Left ventricle myocardium inferior (tissue), 1 donor: ENCODE measurements at regions of chr1 and their contacts with region 1.

Region 1: GRCh38 chr1:184805667-184806295 is 51.1 kb upstream of the EDEM3 start:
- DNase-seq: peak; percentile 89
- H3K4me3 ChIP-seq: no peak overlapping the region
- H3K27ac ChIP-seq: peak overlapping the region; percentile 46
- H3K4me1 ChIP-seq: peaks cover 14% of the 10 kb centered on the region
- H3K27me3 ChIP-seq: no peaks in the 10 kb centered on the region
- CTCF ChIP-seq: peak; percentile 97

Region 2: GRCh38 chr1:184771190-184771691 is 34.5 kb before region 1 on chr1:
- intact Hi-C with region 1: no loop called
- DNase-seq: no peak
- H3K4me3 ChIP-seq: no peak overlapping the region
- H3K27ac ChIP-seq: no peak overlapping the region
- H3K4me1 ChIP-seq: no peaks in the 10 kb centered on the region
- H3K27me3 ChIP-seq: no peaks in the 10 kb centered on the region
- CTCF ChIP-seq: no peak

Region 3: DNA sequence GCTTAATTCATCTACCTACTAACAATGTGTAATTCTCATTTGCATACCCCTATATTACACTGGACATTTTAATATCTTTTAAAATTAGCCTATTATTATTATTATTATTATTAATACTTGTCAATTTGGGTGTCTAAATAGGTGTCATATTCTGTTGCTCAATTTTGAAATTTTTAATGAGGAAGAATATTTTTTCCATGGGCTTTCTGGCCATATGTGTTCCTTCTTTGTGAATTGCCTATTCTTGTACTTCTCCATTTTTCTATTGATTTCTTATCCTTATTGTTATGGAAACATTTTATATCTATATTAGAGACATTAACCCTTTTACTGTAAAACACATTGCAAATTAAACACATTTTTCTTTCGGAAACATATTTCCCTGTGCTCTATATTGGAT is 174.9 kb after region 1 on chr1:
- intact Hi-C with region 1: loop called (anchors 2 kb)
- DNase-seq: no peak
- H3K4me3 ChIP-seq: no peak overlapping the region
- H3K27ac ChIP-seq: no peak overlapping the region
- H3K4me1 ChIP-seq: peaks cover 11% of the 10 kb centered on the region
- H3K27me3 ChIP-seq: no peaks in the 10 kb centered on the region
- CTCF ChIP-seq: no peak

Region 4: GRCh38 chr1:185159966-185160365 is 354.2 kb after region 1 on chr1:
- intact Hi-C with region 1: loop called (anchors 10 kb)
- DNase-seq: no peak
- H3K4me3 ChIP-seq: no peak overlapping the region
- H3K27ac ChIP-seq: no peak overlapping the region
- H3K4me1 ChIP-seq: peaks cover 40% of the 10 kb centered on the region
- H3K27me3 ChIP-seq: no peaks in the 10 kb centered on the region
- CTCF ChIP-seq: no peak